Activated naive CD4-positive, alpha-beta T cell treated with anti-CD3 and anti-CD28 coated beads for 36 hours (primary cell): ENCODE measurements at regions of chrX and their contacts with region 1.

Region 1: DNA sequence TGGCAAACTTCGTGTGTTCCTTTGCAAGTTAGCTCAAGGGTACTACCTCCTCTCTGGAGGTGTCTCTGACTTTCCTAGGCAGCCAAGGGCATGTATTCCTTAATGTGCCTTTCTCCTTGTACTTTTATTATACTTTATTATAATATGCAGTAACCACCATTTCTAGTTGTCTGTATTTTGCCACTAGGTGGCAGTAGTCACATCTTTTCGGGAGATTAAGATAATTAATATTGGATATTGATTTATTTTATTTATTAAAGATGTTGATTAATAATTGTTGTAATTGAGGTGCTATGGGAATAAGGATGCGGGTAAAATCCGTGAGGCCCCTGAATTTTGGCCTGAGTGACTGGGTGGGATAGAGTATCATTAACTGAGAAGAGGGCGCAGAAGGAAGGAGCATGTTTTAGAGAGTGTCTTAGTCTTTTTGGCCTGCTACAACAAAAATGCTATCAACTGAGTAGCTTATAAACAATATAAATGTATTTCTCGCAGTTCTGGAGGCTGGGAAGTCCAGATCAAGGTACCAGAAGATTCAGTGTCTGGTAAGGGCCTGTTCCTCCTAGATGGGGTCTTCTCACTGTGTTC is 153.3 kb downstream of the TMEM164 start:
- DNase-seq: no peak
- H3K4me3 Mint-ChIP-seq: no peak overlapping the region
- H3K27ac Mint-ChIP-seq: no peak overlapping the region
- H3K4me1 Mint-ChIP-seq: peaks cover 10% of the 10 kb centered on the region
- H3K27me3 Mint-ChIP-seq: no peaks in the 10 kb centered on the region

Region 2: DNA sequence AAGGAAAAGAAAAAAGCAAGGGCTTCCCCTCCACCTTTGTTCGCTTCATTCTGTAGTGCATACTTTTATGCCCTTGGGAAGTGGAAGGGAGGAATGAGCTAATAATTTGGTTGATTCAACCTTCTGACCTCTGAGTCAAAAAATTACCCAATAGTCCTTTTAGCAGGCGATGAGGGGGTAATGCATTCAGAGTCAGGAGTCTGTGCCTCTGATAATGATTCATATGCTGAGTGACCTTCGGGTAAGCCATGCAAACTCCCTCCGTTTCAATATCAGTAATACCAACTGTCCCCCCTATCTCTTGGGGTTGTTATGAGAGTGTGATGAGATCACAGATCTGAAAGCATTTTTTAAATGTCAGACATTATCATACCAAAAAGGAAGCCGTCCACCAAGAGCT is 381.6 kb before region 1 on chrX:
- CTCF ChIA-PET with region 1: no interaction called
- intact Hi-C with region 1: no loop called
- DNase-seq: no peak
- H3K4me3 Mint-ChIP-seq: no peak overlapping the region
- H3K27ac Mint-ChIP-seq: no peak overlapping the region
- H3K4me1 Mint-ChIP-seq: no peaks in the 10 kb centered on the region
- H3K27me3 Mint-ChIP-seq: no peaks in the 10 kb centered on the region

Region 3: GRCh38 chrX:109856974-109857373 is 299.3 kb before region 1 on chrX:
- CTCF ChIA-PET with region 1: no interaction called
- intact Hi-C with region 1: no loop called
- DNase-seq: peak; percentile 15
- H3K4me3 Mint-ChIP-seq: no peak overlapping the region
- H3K27ac Mint-ChIP-seq: no peak overlapping the region
- H3K4me1 Mint-ChIP-seq: no peaks in the 10 kb centered on the region
- H3K27me3 Mint-ChIP-seq: no peaks in the 10 kb centered on the region

Region 4: GRCh38 chrX:110402479-110403230 is 246.4 kb after region 1 on chrX:
- CTCF ChIA-PET with region 1: interaction called, 374 read pairs
- intact Hi-C with region 1: no loop called
- DNase-seq: no peak
- H3K4me3 Mint-ChIP-seq: no peak overlapping the region
- H3K27ac Mint-ChIP-seq: no peak overlapping the region
- H3K4me1 Mint-ChIP-seq: no peaks in the 10 kb centered on the region
- H3K27me3 Mint-ChIP-seq: no peaks in the 10 kb centered on the region

Region 5: DNA sequence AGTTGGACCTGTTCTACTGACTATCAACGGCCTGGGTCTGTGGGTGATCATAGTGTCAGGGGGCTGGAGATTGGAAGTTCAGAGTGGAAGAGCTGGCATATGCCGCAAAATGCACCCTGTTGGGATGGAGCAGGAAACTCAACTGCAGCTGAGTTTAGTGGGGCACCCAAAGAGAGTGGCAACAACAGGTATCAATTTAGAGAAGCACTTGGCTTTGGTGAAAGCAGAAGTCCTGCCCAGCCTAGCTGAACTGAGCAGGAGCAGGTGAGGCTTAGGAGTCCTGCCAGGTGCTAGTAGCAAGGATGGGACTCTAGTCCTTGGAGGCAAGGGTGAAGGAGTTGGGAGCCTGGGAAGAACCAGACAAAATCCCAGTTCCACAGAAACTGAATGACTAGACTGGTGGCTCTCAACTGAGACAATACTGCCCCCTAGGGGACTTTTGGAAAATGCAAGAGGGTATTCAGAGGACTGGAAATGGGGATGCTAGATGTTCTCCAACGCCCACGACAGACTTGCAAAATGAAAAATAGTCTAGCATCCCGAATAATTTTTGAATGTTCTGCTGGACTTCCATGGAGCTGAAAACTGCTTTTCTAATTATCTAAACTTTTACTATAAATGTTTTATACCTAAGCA is 251.8 kb after region 1 on chrX:
- CTCF ChIA-PET with region 1: interaction called, 374 read pairs
- intact Hi-C with region 1: loop called (anchors 1 kb)
- DNase-seq: peak; percentile 50
- H3K4me3 Mint-ChIP-seq: no peak overlapping the region
- H3K27ac Mint-ChIP-seq: no peak overlapping the region
- H3K4me1 Mint-ChIP-seq: peaks cover 4% of the 10 kb centered on the region
- H3K27me3 Mint-ChIP-seq: no peaks in the 10 kb centered on the region

Region 6: GRCh38 chrX:110412971-110413721 is 256.9 kb after region 1 on chrX:
- CTCF ChIA-PET with region 1: interaction called, 374 read pairs
- intact Hi-C with region 1: loop called (anchors 1 kb)
- DNase-seq: peak; percentile 77
- H3K4me3 Mint-ChIP-seq: no peak overlapping the region
- H3K27ac Mint-ChIP-seq: no peak overlapping the region
- H3K4me1 Mint-ChIP-seq: peaks cover 5% of the 10 kb centered on the region
- H3K27me3 Mint-ChIP-seq: no peaks in the 10 kb centered on the region

Region 7: GRCh38 chrX:110847334-110847733 is 691.1 kb after region 1 on chrX:
- CTCF ChIA-PET with region 1: interaction called, 3 read pairs
- intact Hi-C with region 1: loop called (anchors 1 kb)
- DNase-seq: no peak
- H3K4me3 Mint-ChIP-seq: no peak overlapping the region
- H3K27ac Mint-ChIP-seq: no peak overlapping the region
- H3K4me1 Mint-ChIP-seq: no peaks in the 10 kb centered on the region
- H3K27me3 Mint-ChIP-seq: no peaks in the 10 kb centered on the region

Region 8: DNA sequence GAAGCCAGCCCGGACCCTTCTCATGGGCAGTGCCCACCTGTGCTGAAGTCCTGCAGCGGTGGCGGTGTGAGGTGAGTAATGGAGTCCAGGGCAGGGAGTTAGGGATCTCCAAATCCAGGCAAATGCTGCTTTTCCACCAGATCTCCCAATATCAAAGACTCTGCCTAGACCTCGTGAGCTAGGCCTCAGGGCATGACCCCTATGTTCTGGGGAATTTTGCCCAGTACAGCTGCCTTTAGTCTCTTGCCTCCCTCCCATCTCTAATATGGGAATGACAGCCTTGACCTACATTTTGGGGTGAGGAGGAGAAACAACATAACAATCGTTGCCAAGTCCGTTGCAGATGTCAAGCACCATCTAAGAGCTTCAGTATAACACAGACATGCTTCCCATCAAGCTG is 947.0 kb after region 1 on chrX:
- CTCF ChIA-PET with region 1: no interaction called
- intact Hi-C with region 1: no loop called
- DNase-seq: no peak
- H3K4me3 Mint-ChIP-seq: no peak overlapping the region
- H3K27ac Mint-ChIP-seq: no peak overlapping the region
- H3K4me1 Mint-ChIP-seq: peaks cover 5% of the 10 kb centered on the region
- H3K27me3 Mint-ChIP-seq: peaks cover 4% of the 10 kb centered on the region